ENCODE measurements at regions of chr14 and their contacts with region 1.

Region 1: DNA sequence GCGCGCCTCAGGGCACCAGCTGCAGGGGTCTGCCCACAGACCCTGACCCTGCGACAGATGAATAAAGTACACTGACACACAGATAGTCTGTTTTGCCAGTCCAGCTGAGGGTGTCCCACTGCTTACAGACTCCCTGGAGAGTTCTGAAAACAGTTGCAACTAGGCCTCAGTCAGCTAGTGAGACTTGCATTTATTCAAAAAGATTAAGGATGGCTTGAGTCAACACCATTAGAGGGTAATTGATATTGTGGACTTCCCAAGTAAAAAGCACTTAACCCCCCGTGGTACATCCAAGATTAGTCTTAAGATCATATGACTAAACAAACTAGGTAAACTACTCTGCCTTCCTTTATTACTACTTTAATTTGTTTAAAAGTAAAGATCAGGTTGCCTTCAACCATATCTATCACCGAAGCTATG is 11.1 kb upstream of the PSEN1 start:
- DNase-seq: no peak
- ATAC-seq: no peak
- H3K4me3 Mint-ChIP-seq: no peak overlapping the region
- H3K27ac Mint-ChIP-seq: no peak overlapping the region
- H3K4me1 Mint-ChIP-seq: no peaks in the 10 kb centered on the region
- H3K27me3 Mint-ChIP-seq: no peaks in the 10 kb centered on the region
- CTCF ChIP-seq: no peak

Region 2: DNA sequence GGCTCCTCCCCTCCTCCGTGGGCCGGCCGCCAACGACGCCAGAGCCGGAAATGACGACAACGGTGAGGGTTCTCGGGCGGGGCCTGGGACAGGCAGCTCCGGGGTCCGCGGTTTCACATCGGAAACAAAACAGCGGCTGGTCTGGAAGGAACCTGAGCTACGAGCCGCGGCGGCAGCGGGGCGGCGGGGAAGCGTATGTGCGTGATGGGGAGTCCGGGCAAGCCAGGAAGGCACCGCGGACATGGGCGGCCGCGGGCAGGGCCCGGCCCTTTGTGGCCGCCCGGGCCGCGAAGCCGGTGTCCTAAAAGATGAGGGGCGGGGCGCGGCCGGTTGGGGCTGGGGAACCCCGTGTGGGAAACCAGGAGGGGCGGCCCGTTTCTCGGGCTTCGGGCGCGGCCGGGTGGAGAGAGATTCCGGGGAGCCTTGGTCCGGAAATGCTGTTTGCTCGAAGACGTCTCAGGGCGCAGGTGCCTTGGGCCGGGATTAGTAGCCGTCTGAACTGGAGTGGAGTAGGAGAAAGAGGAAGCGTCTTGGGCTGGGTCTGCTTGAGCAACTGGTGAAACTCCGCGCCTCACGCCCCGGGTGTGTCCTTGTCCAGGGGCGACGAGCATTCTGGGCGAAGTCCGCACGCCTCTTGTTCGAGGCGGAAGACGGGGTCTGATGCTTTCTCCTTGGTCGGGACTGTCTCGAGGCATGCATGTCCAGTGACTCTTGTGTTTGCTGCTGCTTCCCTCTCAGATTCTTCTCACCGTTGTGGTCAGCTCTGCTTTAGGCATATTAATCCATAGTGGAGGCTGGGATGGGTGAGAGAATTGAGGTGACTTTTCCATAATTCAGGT is 11.4 kb after region 1 on chr14 and contains the start of gene PSEN1:
- CTCF ChIA-PET with region 1: interaction called, 4 read pairs
- POLR2A ChIA-PET with region 1: interaction called, 19 read pairs
- intact Hi-C with region 1: no loop called
- DNase-seq: peak; percentile 99
- ATAC-seq: peak; percentile 99
- H3K4me3 Mint-ChIP-seq: peak within 1 kb of the TSS; percentile 85
- H3K27ac Mint-ChIP-seq: peak within 1 kb of the TSS; percentile 94
- H3K4me1 Mint-ChIP-seq: peaks cover 23% of the 10 kb centered on the region
- H3K27me3 Mint-ChIP-seq: no peaks in the 10 kb centered on the region
- CTCF ChIP-seq: no peak
- total RNA-seq, gene PSEN1: 23.1 to 23.2 TPM

Measured in activated CD8-positive, alpha-beta T cell treated with anti-CD3 and anti-CD28 coated beads for 36 hours (primary cell).